Activated CD4-positive, alpha-beta T cell treated with anti-CD3 and anti-CD28 coated beads, Interleukin-2, amount 10 ng/mL, durations not matched to agents 7 days and 5 days (primary cell): ENCODE measurements at regions of chr3 and their contacts with region 1.

Region 1: GRCh38 chr3:187738331-187739093 is 6.8 kb downstream of the BCL6 start:
- DNase-seq: peak; percentile 78
- H3K4me3 Mint-ChIP-seq: peak overlapping the region; percentile 97
- H3K27ac Mint-ChIP-seq: peak overlapping the region; percentile 100
- H3K4me1 Mint-ChIP-seq: peaks cover 52% of the 10 kb centered on the region
- H3K27me3 Mint-ChIP-seq: no peaks in the 10 kb centered on the region

Region 2: DNA sequence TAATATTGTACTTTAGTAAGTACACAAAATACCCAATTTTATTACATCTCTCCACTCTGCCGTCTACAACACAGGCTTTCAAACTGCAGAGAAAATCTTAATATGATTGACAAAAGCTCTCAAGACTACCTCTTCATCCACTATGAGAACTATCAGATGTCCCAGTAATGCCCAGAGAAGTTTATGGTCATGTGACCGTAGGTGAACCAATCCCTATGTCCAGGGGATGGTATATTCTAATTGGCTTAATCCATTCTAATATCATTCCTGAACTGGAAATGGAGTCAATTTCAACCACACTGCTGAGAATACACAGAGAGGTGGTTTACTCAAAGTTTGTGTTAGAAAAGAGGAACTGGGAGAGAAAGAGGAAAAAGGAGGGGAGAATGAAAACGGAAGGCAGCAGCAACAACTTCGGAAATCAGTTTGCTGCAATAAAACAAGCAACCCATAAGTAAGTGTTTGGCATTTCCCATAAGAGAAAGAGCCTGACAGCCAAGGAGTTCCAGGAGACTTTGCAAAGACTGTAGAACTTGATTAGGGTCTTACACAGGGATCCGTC is 75.6 kb before region 1 on chr3:
- CTCF ChIA-PET with region 1: no interaction called
- POLR2A ChIA-PET with region 1: no interaction called
- DNase-seq: no peak
- H3K4me3 Mint-ChIP-seq: no peak overlapping the region
- H3K27ac Mint-ChIP-seq: no peak overlapping the region
- H3K4me1 Mint-ChIP-seq: no peaks in the 10 kb centered on the region
- H3K27me3 Mint-ChIP-seq: peaks cover 55% of the 10 kb centered on the region

Region 3: GRCh38 chr3:187802928-187803259 is 64.4 kb after region 1 on chr3:
- CTCF ChIA-PET with region 1: interaction called, 40 read pairs
- POLR2A ChIA-PET with region 1: interaction called, 15 read pairs
- DNase-seq: peak; percentile 84
- H3K4me3 Mint-ChIP-seq: peak overlapping the region; percentile 14
- H3K27ac Mint-ChIP-seq: peak overlapping the region; percentile 91
- H3K4me1 Mint-ChIP-seq: peaks cover 89% of the 10 kb centered on the region
- H3K27me3 Mint-ChIP-seq: no peaks in the 10 kb centered on the region

Region 4: GRCh38 chr3:188205992-188206416 is 467.5 kb after region 1 on chr3:
- CTCF ChIA-PET with region 1: interaction called, 11 read pairs
- POLR2A ChIA-PET with region 1: no interaction called
- DNase-seq: no peak
- H3K4me3 Mint-ChIP-seq: no peak overlapping the region
- H3K27ac Mint-ChIP-seq: no peak overlapping the region
- H3K4me1 Mint-ChIP-seq: peaks cover 7% of the 10 kb centered on the region
- H3K27me3 Mint-ChIP-seq: no peaks in the 10 kb centered on the region

Region 5: DNA sequence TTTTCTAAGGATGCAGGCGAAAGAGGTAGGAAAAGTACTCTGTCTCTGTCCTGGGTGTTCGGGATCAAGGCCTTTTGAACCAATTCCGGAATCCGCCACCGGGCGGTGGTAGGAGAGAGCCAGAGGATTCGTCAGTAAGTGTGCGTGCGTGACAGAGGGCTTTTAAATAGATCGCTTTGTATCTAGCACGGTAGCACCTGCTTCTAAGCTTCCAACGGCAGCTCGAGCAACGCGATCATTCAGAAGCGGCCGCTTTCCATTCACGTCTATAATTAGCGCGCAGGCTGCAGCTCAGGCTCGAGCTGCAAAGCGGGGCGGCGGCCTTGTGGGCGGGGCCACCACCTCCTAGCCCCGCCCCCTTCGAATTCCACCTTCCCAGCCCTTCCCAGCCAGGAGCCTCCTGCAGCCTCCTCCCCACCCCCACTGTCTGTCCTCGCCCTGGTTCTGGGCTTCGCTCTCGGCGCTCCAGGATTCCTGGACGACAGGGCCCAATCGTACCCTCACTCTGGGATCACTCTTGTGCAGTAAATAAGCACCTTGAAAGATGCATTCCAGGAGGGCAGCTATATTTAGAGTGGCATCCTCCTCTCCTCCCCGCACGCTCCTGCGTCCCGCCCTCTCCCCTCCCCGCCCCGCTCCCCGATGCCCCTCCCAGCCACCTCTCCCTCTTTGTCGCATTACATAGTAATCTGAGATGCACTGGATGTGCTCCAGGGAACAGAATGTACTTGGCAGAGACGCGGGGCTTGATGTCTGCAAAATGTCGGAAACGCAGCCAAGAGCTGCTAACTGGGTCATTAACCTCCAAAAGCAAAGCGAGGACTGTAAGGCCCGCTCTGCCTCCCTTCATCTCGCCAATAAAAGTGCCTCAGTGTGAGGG is 1209.1 kb after region 1 on chr3:
- CTCF ChIA-PET with region 1: interaction called, 182 read pairs
- POLR2A ChIA-PET with region 1: no interaction called
- DNase-seq: peak; percentile 19
- H3K4me3 Mint-ChIP-seq: peak overlapping the region; percentile 18
- H3K27ac Mint-ChIP-seq: no peak overlapping the region
- H3K4me1 Mint-ChIP-seq: peaks cover 22% of the 10 kb centered on the region
- H3K27me3 Mint-ChIP-seq: peaks cover 13% of the 10 kb centered on the region

Region 6: GRCh38 chr3:189049438-189050236 is 1311.1 kb after region 1 on chr3:
- CTCF ChIA-PET with region 1: interaction called, 13 read pairs
- POLR2A ChIA-PET with region 1: no interaction called
- DNase-seq: peak; percentile 24
- H3K4me3 Mint-ChIP-seq: peak overlapping the region; percentile 37
- H3K27ac Mint-ChIP-seq: peak overlapping the region; percentile 91
- H3K4me1 Mint-ChIP-seq: peaks cover 47% of the 10 kb centered on the region
- H3K27me3 Mint-ChIP-seq: peaks cover 17% of the 10 kb centered on the region

Region 7: GRCh38 chr3:189144617-189145016 is 1406.1 kb after region 1 on chr3:
- CTCF ChIA-PET with region 1: interaction called, 25 read pairs
- POLR2A ChIA-PET with region 1: interaction called, 3 read pairs
- DNase-seq: peak; percentile 43
- H3K4me3 Mint-ChIP-seq: no peak overlapping the region
- H3K27ac Mint-ChIP-seq: peak overlapping the region; percentile 10
- H3K4me1 Mint-ChIP-seq: peaks cover 45% of the 10 kb centered on the region
- H3K27me3 Mint-ChIP-seq: peaks cover 6% of the 10 kb centered on the region